Endothelial cell of umbilical vein (primary cell): ENCODE measurements at regions of chr10 and their contacts with region 1.

Region 1: GRCh38 chr10:92816091-92816531 is 32.2 kb upstream of the EXOC6 start:
- DNase-seq: peak; percentile 99
- H3K4me3 ChIP-seq: no peak overlapping the region
- H3K27ac ChIP-seq: peak overlapping the region; percentile 81
- H3K4me1 ChIP-seq: peaks cover 63% of the 10 kb centered on the region
- H3K27me3 ChIP-seq: no peaks in the 10 kb centered on the region
- CTCF ChIP-seq: peak in 1 of 2 donors; percentile 29
- POLR2A ChIP-seq: peak; percentile 45

Region 2: DNA sequence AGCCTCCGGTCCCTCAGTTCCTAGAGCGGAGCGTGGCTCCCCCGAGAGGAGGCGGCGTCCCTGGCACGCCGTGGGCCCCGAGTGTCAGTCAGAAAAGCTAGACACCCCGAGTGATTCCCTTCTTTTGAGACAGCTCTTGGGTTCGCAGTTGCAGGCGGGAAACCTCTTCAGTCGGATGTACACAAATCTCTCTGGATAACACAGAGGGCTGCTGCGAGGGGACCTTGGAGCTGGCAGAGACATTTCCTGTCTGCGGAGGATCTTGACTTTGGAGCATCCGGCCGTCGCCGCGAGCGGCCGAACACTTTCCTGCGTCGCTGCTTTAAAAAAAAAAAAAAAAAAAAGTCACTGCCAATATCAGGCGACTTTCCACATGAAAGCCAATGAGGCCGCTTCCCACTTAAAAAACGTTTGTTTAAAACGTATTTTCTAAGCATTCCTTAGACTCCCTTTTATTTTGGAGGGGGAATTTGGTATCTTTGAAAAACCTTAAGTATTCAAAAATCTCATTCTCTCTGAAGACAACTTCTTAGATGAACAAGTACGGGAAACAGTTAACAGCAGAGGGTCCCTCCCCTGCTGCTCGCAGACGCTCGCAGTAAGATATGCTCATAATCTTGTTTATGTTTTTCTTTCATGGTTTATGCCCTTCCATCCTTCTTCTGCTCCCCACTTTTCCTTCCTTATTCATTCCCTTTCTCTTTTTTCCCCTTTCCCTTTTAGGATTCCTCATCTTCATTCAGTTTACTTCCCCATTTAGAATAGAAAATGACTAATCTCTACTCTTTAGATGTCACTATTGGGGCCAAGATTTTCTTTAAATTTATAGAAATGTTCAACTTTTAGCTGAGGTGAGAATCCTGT is 116.4 kb before region 1 on chr10:
- CTCF ChIA-PET with region 1: interaction called, 4 read pairs
- POLR2A ChIA-PET with region 1: no interaction called
- dilution Hi-C with region 1: no loop called
- intact Hi-C with region 1: loop called (anchors 1 kb)
- DNase-seq: peak; percentile 69
- H3K4me3 ChIP-seq: peak overlapping the region; percentile 6 to 48 (median 37)
- H3K27ac ChIP-seq: peak overlapping the region; percentile 77
- H3K4me1 ChIP-seq: peaks cover 42% of the 10 kb centered on the region
- H3K27me3 ChIP-seq: no peaks in the 10 kb centered on the region
- CTCF ChIP-seq: no peak
- POLR2A ChIP-seq: peak; percentile 42

Region 3: GRCh38 chr10:92830478-92831389 is 14.6 kb after region 1 on chr10:
- CTCF ChIA-PET with region 1: interaction called, 3 read pairs
- POLR2A ChIA-PET with region 1: interaction called, 3 read pairs
- dilution Hi-C with region 1: no loop called
- intact Hi-C with region 1: loop called (anchors 1 kb)
- DNase-seq: peak; percentile 91
- H3K4me3 ChIP-seq: peak overlapping the region; percentile 19 to 91 (median 69)
- H3K27ac ChIP-seq: peak overlapping the region; percentile 91
- H3K4me1 ChIP-seq: peaks cover 63% of the 10 kb centered on the region
- H3K27me3 ChIP-seq: no peaks in the 10 kb centered on the region
- CTCF ChIP-seq: no peak
- POLR2A ChIP-seq: no peak

Region 4: GRCh38 chr10:92848441-92849233 is 32.5 kb after region 1 on chr10 and contains the start of gene EXOC6:
- CTCF ChIA-PET with region 1: interaction called, 43 read pairs
- POLR2A ChIA-PET with region 1: interaction called, 4 read pairs
- dilution Hi-C with region 1: no loop called
- intact Hi-C with region 1: loop called (anchors 1 kb)
- DNase-seq: peak; percentile 86
- H3K4me3 ChIP-seq: peak within 1 kb of the TSS; percentile 77 to 85 (median 83)
- H3K27ac ChIP-seq: no peak within 1 kb of the TSS
- H3K4me1 ChIP-seq: peaks cover 28% of the 10 kb centered on the region
- H3K27me3 ChIP-seq: no peaks in the 10 kb centered on the region
- CTCF ChIP-seq: no peak
- POLR2A ChIP-seq: peak; percentile 77
- total RNA-seq, gene EXOC6: 103 and 108 TPM in 2 replicates